Posterior vena cava (tissue), 2 donors: ENCODE measurements at regions of chr11 and their contacts with region 1.

Region 1: DNA sequence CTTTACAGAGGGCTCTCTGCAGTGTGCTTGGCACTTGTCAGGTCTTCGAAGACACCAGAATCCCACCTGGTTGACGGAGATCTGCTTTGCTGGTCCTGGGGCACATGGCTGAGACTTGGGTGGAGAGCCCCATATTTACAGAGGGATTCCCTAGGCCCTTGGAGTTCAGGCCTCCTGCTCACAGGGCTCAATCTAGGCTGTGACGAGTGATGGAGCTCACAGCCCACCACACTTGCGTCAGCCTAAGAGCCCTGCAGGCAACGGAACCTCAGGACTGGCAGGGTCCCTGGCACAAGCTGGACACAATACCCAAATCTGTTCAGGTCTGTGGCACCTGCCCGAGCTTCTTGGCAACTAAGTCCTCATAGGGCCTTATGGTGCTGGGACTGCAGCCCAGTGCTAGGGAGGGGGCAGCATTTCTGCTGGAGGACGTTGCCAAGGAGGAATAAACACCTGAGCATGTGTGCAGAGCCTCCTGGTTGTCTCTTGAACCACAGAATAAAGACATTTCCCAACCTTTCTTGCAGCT is 59.1 kb downstream of the KCNC1 start:
- DNase-seq: peak; percentile 58

Region 2: GRCh38 chr11:17752144-17752543 is 41.6 kb before region 1 on chr11:
- intact Hi-C with region 1: loop called in 1 of 2 experiments (anchors 1 kb)
- DNase-seq: peak; percentile 52